GM13977 (cell line): ENCODE measurements at regions of chr13 and their contacts with region 1.

Region 1: GRCh38 chr13:39282400-39282972 is 244.2 kb downstream of the NHLRC3 start:
- DNase-seq: peak; percentile 16
- CTCF ChIP-seq: no peak

Region 2: GRCh38 chr13:39326469-39327171 is 44.1 kb after region 1 on chr13:
- in situ Hi-C with region 1: no loop called
- DNase-seq: no peak
- CTCF ChIP-seq: no peak

Region 3: DNA sequence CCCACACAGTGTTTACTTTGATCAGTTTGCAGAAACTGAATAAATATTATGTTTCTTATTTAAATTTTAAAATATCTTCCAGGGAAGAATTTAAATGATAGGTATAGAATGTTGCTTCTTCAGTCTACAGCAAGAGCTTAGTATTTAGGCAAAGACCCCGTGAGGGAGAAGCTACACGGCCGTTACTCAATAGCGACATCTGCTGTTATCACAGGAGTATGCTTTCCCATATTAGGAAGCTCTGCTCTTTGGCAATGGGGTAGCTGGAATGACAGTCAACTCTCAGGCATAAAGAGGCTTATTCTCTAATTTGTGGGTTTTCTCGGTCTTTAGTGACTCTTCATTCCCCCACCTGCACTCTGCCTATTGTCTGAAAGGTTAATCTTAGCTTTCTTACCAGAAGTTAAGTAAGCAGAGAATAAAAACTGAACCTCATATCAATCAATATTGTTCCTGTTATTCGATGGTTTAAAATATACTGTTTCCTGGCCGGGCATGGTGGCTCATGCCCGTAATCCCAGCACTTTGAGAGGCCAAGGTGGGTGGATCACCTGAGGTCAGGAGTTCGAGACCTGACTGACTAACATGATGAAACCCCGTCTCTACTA is 333.7 kb after region 1 on chr13:
- in situ Hi-C with region 1: loop called (anchors 10 kb)
- DNase-seq: peak; percentile 70
- CTCF ChIP-seq: peak; percentile 83